Sigmoid colon (tissue), 7 donors: ENCODE measurements at regions of chr6 and their contacts with region 1.

Region 1: GRCh38 chr6:127366281-127367022 is 23.0 kb upstream of the ECHDC1 start:
- DNase-seq: peak; percentile 75
- H3K4me3 ChIP-seq: peak overlapping the region in 2 of 4 donors; percentile 4 to 16
- H3K27ac ChIP-seq: peak overlapping the region in 3 of 4 donors; percentile 66 to 76 (median 74)
- H3K4me1 ChIP-seq: peaks cover 0 to 15% (median 13%) of the 10 kb centered on the region in 4 donors
- H3K27me3 ChIP-seq: no peaks in the 10 kb centered on the region
- CTCF ChIP-seq: no peak
- EP300 ChIP-seq: peak in 1 of 4 donors; percentile 14
- POLR2A ChIP-seq: no peak

Region 2: GRCh38 chr6:127415096-127415495 is 48.6 kb after region 1 on chr6:
- intact Hi-C with region 1: loop called (anchors 10 kb)
- DNase-seq: no peak
- H3K4me3 ChIP-seq: no peak overlapping the region
- H3K27ac ChIP-seq: no peak overlapping the region
- H3K4me1 ChIP-seq: peaks cover 0 to 1% (median under 1%) of the 10 kb centered on the region in 4 donors
- H3K27me3 ChIP-seq: no peaks in the 10 kb centered on the region
- CTCF ChIP-seq: no peak
- EP300 ChIP-seq: no peak
- POLR2A ChIP-seq: no peak